Right ventricle myocardium superior (tissue), 1 donor: ENCODE measurements at regions of chr17 and their contacts with region 1.

Region 1: DNA sequence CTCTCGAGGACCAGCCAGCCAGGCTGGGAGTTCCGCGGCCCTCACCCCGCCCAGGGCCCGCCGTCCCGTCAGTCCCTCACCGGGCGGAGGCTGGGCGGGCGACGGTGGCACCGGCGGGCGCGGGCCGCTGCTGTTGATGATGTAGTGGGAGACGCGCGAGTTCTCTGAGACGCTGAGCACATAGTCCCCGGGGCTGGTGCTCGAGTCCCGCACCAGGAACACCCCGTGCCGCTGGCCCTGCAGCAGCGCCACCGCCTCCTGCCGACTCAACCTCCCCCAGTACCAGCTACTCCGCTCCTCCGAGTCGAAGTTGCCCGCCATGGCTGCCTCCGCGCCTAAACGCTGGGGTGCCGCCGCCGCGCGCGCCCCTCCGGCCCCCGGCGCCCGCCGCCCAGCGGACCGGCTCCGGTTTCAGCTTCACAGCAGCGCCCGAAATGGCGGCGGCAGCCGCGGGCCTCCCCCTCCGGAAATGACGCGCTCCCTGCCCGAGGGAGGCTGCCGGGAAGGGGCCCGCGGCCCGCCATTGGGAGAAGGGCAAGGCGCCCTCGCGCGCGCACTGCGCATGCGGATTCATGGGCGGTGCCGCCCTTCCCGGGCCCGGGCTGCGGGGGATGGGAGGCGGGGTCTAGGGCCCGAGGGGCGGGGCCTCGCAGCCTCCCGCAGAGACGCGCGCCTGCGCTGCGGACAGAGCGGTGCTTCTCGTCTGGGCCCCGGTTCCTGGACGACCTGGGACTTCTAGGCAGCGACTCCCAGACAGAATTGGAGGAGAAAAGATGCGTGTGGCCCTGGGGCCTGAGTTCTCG is at the start of gene CRK:
- DNase-seq: peak; percentile 98
- ATAC-seq: peak; percentile 93
- total RNA-seq, gene CRK: 36.0 TPM

Region 2: DNA sequence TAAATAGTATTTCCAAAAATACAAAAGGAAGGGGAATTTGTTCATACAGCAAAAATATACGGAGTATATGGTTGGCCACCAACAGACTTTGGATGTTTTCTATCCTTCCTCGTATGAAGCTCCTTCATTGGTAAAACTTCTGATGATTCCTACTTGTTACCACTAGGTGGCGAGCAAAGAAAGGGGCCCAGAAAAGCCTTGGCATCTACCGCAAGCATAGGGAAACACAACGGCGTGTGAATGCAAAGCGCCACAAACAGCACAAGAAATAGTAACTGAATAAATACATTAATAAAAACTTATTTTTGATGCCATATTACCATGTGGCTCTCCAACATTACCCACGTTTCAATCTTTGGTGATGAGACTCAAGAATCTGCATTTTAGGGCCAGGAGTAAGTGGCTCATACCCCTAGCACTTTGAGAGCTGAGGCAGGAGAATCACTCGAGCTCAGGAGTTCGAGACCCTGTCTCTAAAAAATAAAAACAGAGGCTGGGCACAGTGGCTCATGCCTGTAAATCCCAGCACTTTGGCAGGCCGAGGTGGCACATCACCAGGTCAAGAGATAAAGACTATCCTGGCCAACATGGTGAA is 90.5 kb before region 1 on chr17:
- intact Hi-C with region 1: loop called (anchors 5 kb)
- DNase-seq: no peak
- ATAC-seq: peak; percentile 78